Heart right ventricle (tissue), 16 donors: ENCODE measurements at regions of chr3 and their contacts with region 1.

Region 1: GRCh38 chr3:105885256-105885655 is 16.4 kb upstream of the CBLB start:
- DNase-seq: no peak
- ATAC-seq: peak in 5 of 8 donors; percentile 52 to 78 (median 61)
- H3K4me3 ChIP-seq: no peak overlapping the region
- H3K27ac ChIP-seq: peak overlapping the region in 3 of 10 donors; percentile 18 to 48 (median 18)
- H3K4me1 ChIP-seq: peaks cover 0 to 11% (median 8%) of the 10 kb centered on the region in 9 donors
- H3K27me3 ChIP-seq: no peaks in the 10 kb centered on the region
- CTCF ChIP-seq: no peak

Region 2: GRCh38 chr3:105944721-105945120 is 59.5 kb after region 1 on chr3:
- intact Hi-C with region 1: loop called in 1 of 10 experiments (anchors 10 kb)
- DNase-seq: no peak
- ATAC-seq: no peak
- H3K4me3 ChIP-seq: no peak overlapping the region
- H3K27ac ChIP-seq: no peak overlapping the region
- H3K4me1 ChIP-seq: no peaks in the 10 kb centered on the region
- H3K27me3 ChIP-seq: no peaks in the 10 kb centered on the region
- CTCF ChIP-seq: no peak

Region 3: GRCh38 chr3:106452096-106452495 is 566.8 kb after region 1 on chr3:
- intact Hi-C with region 1: no loop called
- DNase-seq: no peak
- ATAC-seq: no peak
- H3K4me3 ChIP-seq: no peak overlapping the region
- H3K27ac ChIP-seq: no peak overlapping the region
- H3K4me1 ChIP-seq: peaks cover 0 to 9% (median 0%) of the 10 kb centered on the region in 9 donors
- H3K27me3 ChIP-seq: no peaks in the 10 kb centered on the region
- CTCF ChIP-seq: no peak